ENCODE measurements at regions of chr9 and their contacts with region 1.

Region 1: GRCh38 chr9:129610473-129611301 is 10.2 kb downstream of the C9orf50 start:
- DNase-seq: peak; percentile 81
- H3K4me3 ChIP-seq: peak overlapping the region; percentile 78
- H3K27ac ChIP-seq: peak overlapping the region; percentile 95
- H3K4me1 ChIP-seq: peaks cover 52% of the 10 kb centered on the region
- H3K27me3 ChIP-seq: no peaks in the 10 kb centered on the region
- CTCF ChIP-seq: peak; percentile 85

Region 2: GRCh38 chr9:129139993-129140396 is 470.7 kb before region 1 on chr9:
- intact Hi-C with region 1: loop called (anchors 5 kb)
- DNase-seq: peak; percentile 95
- H3K4me3 ChIP-seq: peak overlapping the region; percentile 71
- H3K27ac ChIP-seq: peak overlapping the region; percentile 100
- H3K4me1 ChIP-seq: peaks cover 78% of the 10 kb centered on the region
- H3K27me3 ChIP-seq: no peaks in the 10 kb centered on the region
- CTCF ChIP-seq: no peak

Region 3: DNA sequence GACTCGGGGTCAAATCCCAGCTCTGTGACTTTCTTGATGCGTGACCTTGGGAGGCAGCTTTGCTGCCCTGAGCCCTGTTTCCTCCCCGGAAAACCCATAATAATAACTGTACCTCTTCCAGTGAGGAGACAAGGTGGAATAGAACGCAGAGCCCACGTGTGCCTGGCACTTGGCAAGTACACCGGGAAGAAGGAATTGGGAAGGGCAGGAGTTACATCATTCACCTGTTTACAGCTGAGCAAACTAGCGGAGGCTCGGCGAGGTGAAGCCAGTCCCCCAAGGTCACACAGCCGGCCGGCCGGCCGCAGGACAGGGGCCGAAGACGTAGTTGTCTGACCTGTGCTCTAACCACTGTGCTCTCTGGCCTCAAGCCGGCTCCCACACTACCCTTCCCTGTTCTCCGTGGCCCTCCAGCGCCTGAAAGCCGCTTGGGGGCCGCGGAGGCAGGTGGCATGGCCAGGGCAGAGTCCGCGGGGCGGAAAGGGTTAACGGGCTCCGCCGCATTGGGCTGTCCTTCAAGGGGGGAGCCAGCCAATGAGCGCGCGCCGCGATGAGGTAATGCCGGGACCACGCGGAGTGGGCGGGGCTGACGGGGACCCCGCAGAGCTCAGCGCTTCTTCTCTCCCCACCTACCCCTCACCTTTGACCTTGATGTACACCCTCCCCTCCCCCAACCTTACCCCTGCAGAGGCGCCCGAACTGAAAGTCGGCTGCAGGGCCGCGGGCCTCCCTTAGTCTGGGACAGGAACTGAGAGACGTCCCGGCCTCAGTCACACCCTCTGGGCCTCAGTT is 115.0 kb before region 1 on chr9:
- intact Hi-C with region 1: loop called (anchors 10 kb)
- DNase-seq: peak; percentile 97
- H3K4me3 ChIP-seq: peak overlapping the region; percentile 72
- H3K27ac ChIP-seq: peak overlapping the region; percentile 98
- H3K4me1 ChIP-seq: peaks cover 95% of the 10 kb centered on the region
- H3K27me3 ChIP-seq: no peaks in the 10 kb centered on the region
- CTCF ChIP-seq: no peak